Vagina (tissue), 2 donors: ENCODE measurements at regions of chr2 and their contacts with region 1.

Region 1: GRCh38 chr2:101644842-101645383 is 52.6 kb upstream of the MAP4K4 start:
- DNase-seq: no peak
- H3K4me3 ChIP-seq: no peak overlapping the region
- H3K27ac ChIP-seq: no peak overlapping the region
- H3K4me1 ChIP-seq: no peaks in the 10 kb centered on the region
- H3K27me3 ChIP-seq: no peaks in the 10 kb centered on the region
- CTCF ChIP-seq: no peak
- POLR2A ChIP-seq: no peak

Region 2: GRCh38 chr2:101361121-101361870 is 283.6 kb before region 1 on chr2:
- intact Hi-C with region 1: no loop called
- DNase-seq: no peak
- H3K4me3 ChIP-seq: no peak overlapping the region
- H3K27ac ChIP-seq: no peak overlapping the region
- H3K4me1 ChIP-seq: no peaks in the 10 kb centered on the region
- H3K27me3 ChIP-seq: no peaks in the 10 kb centered on the region
- CTCF ChIP-seq: no peak
- POLR2A ChIP-seq: no peak

Region 3: DNA sequence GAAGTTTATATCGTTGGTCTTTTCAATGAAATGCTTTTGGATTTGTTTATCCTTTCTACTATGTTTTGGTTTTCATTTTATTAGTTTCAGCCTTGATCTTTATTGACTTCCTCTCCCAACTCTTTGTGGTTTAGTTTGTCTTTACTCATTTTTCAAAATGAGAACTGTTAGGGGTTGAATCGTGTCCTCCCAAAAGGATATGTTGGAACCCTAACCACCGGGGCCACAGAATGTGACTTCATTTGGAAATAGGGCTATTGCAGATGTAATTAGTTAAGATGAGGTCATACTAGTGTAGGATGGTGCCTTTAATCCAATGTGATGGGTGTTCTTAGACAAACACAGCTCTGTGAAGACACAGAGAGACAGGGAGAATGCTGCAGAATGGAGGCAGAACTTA is 286.5 kb after region 1 on chr2:
- intact Hi-C with region 1: no loop called
- DNase-seq: no peak
- H3K4me3 ChIP-seq: no peak overlapping the region
- H3K27ac ChIP-seq: no peak overlapping the region
- H3K4me1 ChIP-seq: no peaks in the 10 kb centered on the region
- H3K27me3 ChIP-seq: no peaks in the 10 kb centered on the region
- CTCF ChIP-seq: no peak
- POLR2A ChIP-seq: no peak

Region 4: DNA sequence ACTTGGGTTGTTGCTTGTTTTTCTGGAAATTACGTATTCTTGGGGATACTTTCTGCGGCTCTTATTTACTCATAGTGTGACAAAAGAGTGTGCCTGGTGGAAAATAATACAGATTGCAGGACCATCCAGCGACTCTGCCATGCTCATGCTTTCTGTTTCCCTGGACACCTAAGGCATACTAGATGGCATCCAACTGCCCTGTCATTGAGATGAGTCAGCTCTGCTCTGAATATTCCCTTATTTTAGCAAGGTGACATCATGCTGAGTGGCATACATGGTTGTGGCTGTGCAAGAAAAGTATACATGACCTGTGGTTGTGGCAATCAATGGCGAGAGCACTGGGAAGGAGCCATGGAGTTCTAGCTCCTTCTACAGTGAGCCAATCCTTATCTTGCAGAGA is 1588.0 kb after region 1 on chr2:
- intact Hi-C with region 1: loop called (anchors 10 kb)
- DNase-seq: no peak
- H3K4me3 ChIP-seq: no peak overlapping the region
- H3K27ac ChIP-seq: no peak overlapping the region
- H3K4me1 ChIP-seq: no peaks in the 10 kb centered on the region
- H3K27me3 ChIP-seq: no peaks in the 10 kb centered on the region
- CTCF ChIP-seq: no peak
- POLR2A ChIP-seq: no peak